ENCODE measurements at regions of chr22 and their contacts with region 1.

Region 1: GRCh38 chr22:44697423-44698141 is 4.4 kb upstream of the PRR5 start:
- DNase-seq: peak; percentile 72 to 83
- H3K4me3 ChIP-seq: no peak overlapping the region
- H3K27ac ChIP-seq: no peak overlapping the region
- H3K4me1 ChIP-seq: no peaks in the 10 kb centered on the region
- H3K27me3 ChIP-seq: 0 out of 2 replicates have a peak, but pooled peaks cover 6% of the 10 kb centered on the region
- CTCF ChIP-seq: peak; percentile 99

Region 2: GRCh38 chr22:44658311-44658953 is 39.1 kb before region 1 on chr22:
- CTCF ChIA-PET with region 1: no interaction called
- POLR2A ChIA-PET with region 1: no interaction called
- intact Hi-C with region 1: no loop called
- DNase-seq: no peak
- H3K4me3 ChIP-seq: no peak overlapping the region
- H3K27ac ChIP-seq: no peak overlapping the region
- H3K4me1 ChIP-seq: no peaks in the 10 kb centered on the region
- H3K27me3 ChIP-seq: peaks cover 43% of the 10 kb centered on the region
- CTCF ChIP-seq: no peak

Region 3: GRCh38 chr22:44684506-44685383 is 12.8 kb before region 1 on chr22:
- CTCF ChIA-PET with region 1: interaction called, 17 read pairs
- POLR2A ChIA-PET with region 1: no interaction called
- intact Hi-C with region 1: no loop called
- DNase-seq: peak; percentile 90 to 92
- H3K4me3 ChIP-seq: no peak overlapping the region
- H3K27ac ChIP-seq: 0 out of 2 replicates have a peak overlapping the region, but pooled peaks have one; percentile 13
- H3K4me1 ChIP-seq: peaks cover 34% of the 10 kb centered on the region
- H3K27me3 ChIP-seq: no peaks in the 10 kb centered on the region
- CTCF ChIP-seq: peak; percentile 95

Region 4: GRCh38 chr22:44735540-44736488 is 38.2 kb after region 1 on chr22:
- CTCF ChIA-PET with region 1: no interaction called
- POLR2A ChIA-PET with region 1: no interaction called
- intact Hi-C with region 1: loop called (anchors 1 kb)
- DNase-seq: peak; percentile 48 to 81
- H3K4me3 ChIP-seq: no peak overlapping the region
- H3K27ac ChIP-seq: no peak overlapping the region
- H3K4me1 ChIP-seq: peaks cover 25% of the 10 kb centered on the region
- H3K27me3 ChIP-seq: no peaks in the 10 kb centered on the region
- CTCF ChIP-seq: peak; percentile 99

Region 5: DNA sequence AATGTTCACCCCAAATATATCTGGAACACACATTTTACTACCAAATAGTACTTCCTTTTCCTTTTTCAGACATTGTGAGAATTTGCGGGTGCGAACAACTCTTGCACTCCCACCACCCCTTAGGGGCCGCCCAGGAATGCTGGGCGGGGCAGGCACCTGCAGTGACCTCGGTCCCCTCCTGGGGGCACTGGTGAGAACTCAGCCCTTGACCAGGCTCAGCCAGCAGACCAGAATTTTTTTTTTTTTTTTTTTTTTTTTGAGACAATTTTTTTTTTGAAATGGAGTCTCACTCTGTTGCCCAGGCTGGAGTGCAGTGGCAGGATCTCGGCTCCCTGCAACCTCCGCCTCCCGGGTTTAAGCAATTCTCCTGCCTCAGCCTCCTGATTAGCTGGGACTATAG is 130.6 kb after region 1 on chr22:
- CTCF ChIA-PET with region 1: no interaction called
- POLR2A ChIA-PET with region 1: no interaction called
- intact Hi-C with region 1: loop called (anchors 10 kb)
- DNase-seq: peak in 1 of 2 experiments; percentile 31
- H3K4me3 ChIP-seq: no peak overlapping the region
- H3K27ac ChIP-seq: no peak overlapping the region
- H3K4me1 ChIP-seq: no peaks in the 10 kb centered on the region
- H3K27me3 ChIP-seq: no peaks in the 10 kb centered on the region
- CTCF ChIP-seq: peak; percentile 82

Region 6: DNA sequence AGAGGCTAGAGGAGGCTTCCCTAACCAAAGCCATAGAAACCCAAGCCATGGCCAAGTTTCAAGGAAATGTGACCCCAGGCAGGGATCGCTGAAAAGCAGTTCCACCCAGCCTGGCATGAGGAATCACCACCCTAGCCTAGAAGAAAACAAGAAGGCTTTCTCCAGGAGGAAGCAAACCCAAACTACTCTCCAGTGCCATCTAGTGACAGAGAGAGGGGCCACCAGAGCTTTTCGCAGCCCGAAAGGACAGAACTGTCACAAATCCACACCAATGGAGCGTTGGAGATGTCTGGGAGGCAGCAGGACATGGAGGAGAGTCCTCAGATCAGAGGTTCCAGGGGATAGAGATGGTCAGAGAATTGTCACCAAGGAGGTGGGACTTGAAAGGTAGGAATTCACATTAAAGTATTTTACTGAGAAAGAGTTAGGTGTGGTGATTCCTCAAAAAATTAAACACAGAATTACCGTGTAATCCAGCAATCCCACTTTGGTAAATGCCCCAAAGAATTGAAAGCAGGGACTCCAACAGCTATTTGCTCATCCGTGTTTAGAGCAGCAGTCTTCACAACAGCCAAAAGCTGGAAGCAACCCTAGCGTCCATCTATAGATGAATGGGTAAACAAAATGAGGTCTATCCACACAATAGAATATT is 398.8 kb after region 1 on chr22:
- CTCF ChIA-PET with region 1: no interaction called
- POLR2A ChIA-PET with region 1: no interaction called
- intact Hi-C with region 1: loop called (anchors 10 kb)
- DNase-seq: peak; percentile 53 to 67
- H3K4me3 ChIP-seq: no peak overlapping the region
- H3K27ac ChIP-seq: no peak overlapping the region
- H3K4me1 ChIP-seq: no peaks in the 10 kb centered on the region
- H3K27me3 ChIP-seq: peaks cover 76% of the 10 kb centered on the region
- CTCF ChIP-seq: peak; percentile 88

Measured in PC-9 (cell line).